ENCODE measurements at regions of chr11 and their contacts with region 1.

Region 1: DNA sequence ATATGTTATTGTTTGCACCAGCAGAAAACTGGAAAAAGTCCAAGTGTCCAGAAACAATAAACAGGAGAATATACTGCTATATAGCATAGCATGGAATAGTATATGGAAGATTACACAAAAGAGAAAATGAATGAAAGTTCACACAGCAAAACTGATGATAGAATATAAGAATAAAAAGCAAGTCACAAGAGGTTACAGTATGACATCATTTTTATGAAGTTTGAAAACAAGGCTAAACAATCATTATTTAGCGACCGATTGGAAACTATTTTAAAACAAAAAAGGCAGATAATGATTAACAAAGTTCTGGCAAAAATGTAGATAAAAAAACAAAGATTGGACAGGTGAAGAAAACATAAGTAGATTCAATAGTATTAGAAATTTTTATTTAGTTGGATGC is 47.1 kb downstream of the SOX6 start:
- DNase-seq: no peak
- ATAC-seq: no peak
- H3K4me3 ChIP-seq: no peak overlapping the region
- H3K27ac ChIP-seq: no peak overlapping the region
- H3K4me1 ChIP-seq: no peaks in the 10 kb centered on the region
- H3K27me3 ChIP-seq: no peaks in the 10 kb centered on the region
- CTCF ChIP-seq: no peak
- POLR2A ChIP-seq: no peak
- RAD21 ChIP-seq: no peak

Region 2: DNA sequence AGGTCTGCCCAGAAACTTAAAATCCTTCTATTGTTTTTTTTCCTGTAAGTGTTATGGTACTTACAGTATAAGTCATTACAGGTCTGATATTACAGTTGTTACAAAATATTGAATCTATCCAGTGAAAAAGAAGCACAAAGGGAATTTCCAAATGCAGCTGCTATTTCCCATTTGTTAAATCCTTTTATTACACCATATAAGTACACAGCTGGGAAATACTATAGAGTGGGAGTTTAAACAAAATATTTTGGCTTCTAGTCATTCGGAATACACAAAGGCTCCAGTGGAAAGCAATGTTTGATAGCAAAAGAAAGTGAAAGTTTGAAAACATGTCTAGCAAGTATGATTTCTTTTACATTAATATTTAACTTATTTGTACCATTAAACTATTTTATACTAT is 29.2 kb after region 1 on chr11:
- CTCF ChIA-PET with region 1: no interaction called
- POLR2A ChIA-PET with region 1: no interaction called
- dilution Hi-C with region 1: no loop called
- in situ Hi-C with region 1: no loop called
- intact Hi-C with region 1: loop called (anchors 5 kb)
- DNase-seq: peak; percentile 91
- ATAC-seq: peak; percentile 78
- H3K4me3 ChIP-seq: no peak overlapping the region
- H3K27ac ChIP-seq: peak overlapping the region; percentile 53; the same call in 1 of the 2 replicates
- H3K4me1 ChIP-seq: no peaks in the 10 kb centered on the region
- H3K27me3 ChIP-seq: no peaks in the 10 kb centered on the region
- CTCF ChIP-seq: no peak
- POLR2A ChIP-seq: no peak
- RAD21 ChIP-seq: no peak

Region 3: GRCh38 chr11:16454289-16454863 is 145.2 kb after region 1 on chr11:
- CTCF ChIA-PET with region 1: no interaction called
- POLR2A ChIA-PET with region 1: no interaction called
- dilution Hi-C with region 1: no loop called
- in situ Hi-C with region 1: no loop called
- intact Hi-C with region 1: no loop called
- DNase-seq: peak; percentile 55
- ATAC-seq: peak; percentile 61
- H3K4me3 ChIP-seq: no peak overlapping the region
- H3K27ac ChIP-seq: no peak overlapping the region
- H3K4me1 ChIP-seq: peaks cover 5% of the 10 kb centered on the region; the same call in 1 of the 2 replicates
- H3K27me3 ChIP-seq: no peaks in the 10 kb centered on the region
- CTCF ChIP-seq: no peak
- POLR2A ChIP-seq: no peak
- RAD21 ChIP-seq: no peak

Region 4: DNA sequence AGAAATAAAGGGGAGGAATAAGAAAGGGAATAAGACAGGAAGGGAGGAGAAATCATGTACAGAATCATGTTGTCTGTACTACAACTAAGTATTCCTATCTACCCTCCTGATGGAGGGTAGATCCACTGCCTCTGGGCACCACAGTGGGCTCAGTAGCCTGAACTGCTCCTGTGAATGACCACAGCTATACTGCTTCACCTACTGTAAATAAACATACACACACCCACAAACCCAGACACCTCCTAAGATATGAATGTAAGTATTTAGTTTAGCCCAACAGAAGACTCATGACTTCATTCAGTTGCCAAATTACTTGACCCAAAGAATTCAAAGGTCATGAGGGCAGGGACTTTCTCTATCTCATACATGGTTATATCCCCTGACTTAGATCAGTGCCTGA is 251.9 kb after region 1 on chr11:
- CTCF ChIA-PET with region 1: no interaction called
- POLR2A ChIA-PET with region 1: no interaction called
- dilution Hi-C with region 1: no loop called
- in situ Hi-C with region 1: no loop called
- intact Hi-C with region 1: no loop called
- DNase-seq: peak; percentile 63
- ATAC-seq: peak; percentile 92
- H3K4me3 ChIP-seq: no peak overlapping the region
- H3K27ac ChIP-seq: no peak overlapping the region
- H3K4me1 ChIP-seq: peaks cover 3% of the 10 kb centered on the region; the same call in 1 of the 2 replicates
- H3K27me3 ChIP-seq: no peaks in the 10 kb centered on the region
- CTCF ChIP-seq: no peak
- POLR2A ChIP-seq: no peak
- RAD21 ChIP-seq: no peak

Measured in IMR-90 (cell line).